PC-3 (cell line): ENCODE measurements at regions of chr7 and their contacts with region 1.

Region 1: DNA sequence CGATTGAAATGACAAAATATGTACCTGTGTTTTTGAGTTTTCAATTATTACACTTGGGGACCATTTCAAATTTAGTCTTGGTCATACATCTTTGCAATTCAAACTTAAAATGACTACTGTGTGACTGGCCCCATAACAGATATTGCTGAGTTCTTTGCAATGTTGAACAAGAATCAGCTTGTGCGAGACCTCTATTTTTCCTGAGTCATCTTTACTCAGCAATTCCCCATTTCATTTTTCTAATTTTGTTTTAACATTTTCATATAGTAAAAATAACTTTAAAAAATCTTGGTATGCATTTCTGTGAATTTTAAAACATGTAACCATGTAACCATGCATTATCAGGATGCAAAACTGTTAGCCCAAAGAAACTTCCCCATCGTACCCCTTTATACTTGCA is 678.1 kb downstream of the ANKRD7 start:
- DNase-seq: no peak
- ATAC-seq: no peak
- H3K4me3 ChIP-seq: no peak overlapping the region
- H3K27ac ChIP-seq: no peak overlapping the region
- H3K4me1 ChIP-seq: no peaks in the 10 kb centered on the region
- H3K27me3 ChIP-seq: no peaks in the 10 kb centered on the region
- CTCF ChIP-seq: no peak

Region 2: DNA sequence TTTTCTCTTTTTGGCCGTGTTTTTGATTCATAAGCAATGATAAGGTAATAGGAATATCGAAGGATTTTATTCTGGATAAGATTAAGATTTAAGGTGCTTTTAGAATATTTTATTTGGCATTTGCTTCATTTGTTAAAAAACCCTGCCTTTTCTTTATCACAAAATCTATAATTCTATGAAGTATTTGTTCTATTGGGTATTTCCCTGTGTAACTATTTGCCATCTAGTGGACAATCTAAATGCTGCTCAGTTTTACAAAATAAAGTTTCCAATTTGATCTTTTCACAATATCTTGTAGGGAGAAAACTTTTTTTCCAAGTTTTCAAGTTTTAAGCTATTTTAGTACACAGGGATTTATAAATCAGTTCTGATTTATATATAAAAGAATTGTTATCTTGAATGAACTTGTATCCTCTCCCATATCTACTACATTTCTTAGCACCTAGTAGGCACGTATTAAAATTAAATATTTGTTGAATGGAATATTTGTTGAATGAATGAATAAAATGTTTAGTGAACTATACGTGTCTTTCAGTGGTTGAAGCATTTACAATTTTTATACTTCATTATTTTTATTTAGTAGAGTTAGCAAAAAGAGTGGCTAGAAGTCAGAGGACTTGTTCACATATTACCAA is 651.6 kb before region 1 on chr7:
- CTCF ChIA-PET with region 1: no interaction called
- POLR2A ChIA-PET with region 1: no interaction called
- intact Hi-C with region 1: loop called (anchors 10 kb)
- DNase-seq: peak; percentile 4
- ATAC-seq: 0 out of 2 replicates have a peak, but pooled peaks have one; percentile 50
- H3K4me3 ChIP-seq: no peak overlapping the region
- H3K27ac ChIP-seq: no peak overlapping the region
- H3K4me1 ChIP-seq: no peaks in the 10 kb centered on the region
- H3K27me3 ChIP-seq: no peaks in the 10 kb centered on the region
- CTCF ChIP-seq: peak; percentile 58

Region 3: GRCh38 chr7:118810420-118810819 is 92.2 kb before region 1 on chr7:
- CTCF ChIA-PET with region 1: no interaction called
- POLR2A ChIA-PET with region 1: no interaction called
- intact Hi-C with region 1: no loop called
- DNase-seq: no peak
- ATAC-seq: no peak
- H3K4me3 ChIP-seq: no peak overlapping the region
- H3K27ac ChIP-seq: no peak overlapping the region
- H3K4me1 ChIP-seq: no peaks in the 10 kb centered on the region
- H3K27me3 ChIP-seq: no peaks in the 10 kb centered on the region
- CTCF ChIP-seq: no peak